OCI-LY7 (cell line): ENCODE measurements at regions of chr1 and their contacts with region 1.

Region 1: GRCh38 chr1:93345633-93346420 is at the start of gene DR1:
- DNase-seq: peak; percentile 92
- H3K4me3 ChIP-seq: peak within 1 kb of the TSS; percentile 87
- H3K27ac ChIP-seq: peak within 1 kb of the TSS; percentile 74
- H3K4me1 ChIP-seq: peaks cover 20% of the 10 kb centered on the region
- CTCF ChIP-seq: no peak
- total RNA-seq, gene DR1: 61.3 and 81.3 TPM in 2 replicates

Region 2: DNA sequence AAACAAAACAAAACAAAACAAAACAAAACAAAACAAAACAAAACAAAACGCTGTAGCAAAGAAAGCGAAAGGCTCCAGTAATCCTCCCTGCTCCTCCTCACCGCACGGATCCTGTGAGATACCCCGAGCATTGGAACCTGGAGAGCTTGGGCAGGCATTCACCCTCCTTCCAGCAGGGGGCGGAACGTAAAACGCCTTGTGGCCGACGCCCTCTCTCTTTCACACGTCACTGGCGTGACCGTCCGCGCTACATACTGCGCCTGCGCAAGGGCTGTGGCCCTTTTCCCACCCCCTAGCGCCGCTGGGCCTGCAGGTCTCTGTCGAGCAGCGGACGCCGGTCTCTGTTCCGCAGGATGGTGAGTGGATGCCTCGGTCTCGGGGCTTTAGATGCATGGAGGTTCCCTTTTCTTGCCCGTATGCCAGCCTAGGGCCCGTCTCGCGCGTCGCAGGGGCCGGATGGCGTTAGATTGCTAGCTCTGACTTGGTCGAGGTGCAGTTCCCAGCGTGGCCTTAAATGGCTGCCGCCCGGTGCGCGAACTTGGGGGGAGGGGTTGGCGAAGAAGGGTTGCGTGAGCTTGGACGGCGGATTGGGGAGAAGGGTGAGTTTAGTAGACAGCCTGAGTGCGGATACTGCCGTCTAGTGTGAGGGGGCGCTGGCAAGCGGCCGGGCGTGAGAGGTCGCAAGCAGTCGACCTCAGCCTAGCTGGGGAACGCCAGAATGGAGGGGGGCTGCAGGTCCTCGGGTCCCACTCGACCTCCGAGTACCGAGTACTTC is 513.9 kb before region 1 on chr1 and contains the start of gene RPL5:
- CTCF ChIA-PET with region 1: no interaction called
- POLR2A ChIA-PET with region 1: interaction called, 3 read pairs
- intact Hi-C with region 1: loop called (anchors 5 kb)
- DNase-seq: peak; percentile 98
- H3K4me3 ChIP-seq: peak within 1 kb of the TSS; percentile 89
- H3K27ac ChIP-seq: peak within 1 kb of the TSS; percentile 59
- H3K4me1 ChIP-seq: peaks cover 41% of the 10 kb centered on the region
- CTCF ChIP-seq: peak; percentile 85
- total RNA-seq, gene RPL5: 1,862 and 2,614 TPM in 2 replicates

Region 3: DNA sequence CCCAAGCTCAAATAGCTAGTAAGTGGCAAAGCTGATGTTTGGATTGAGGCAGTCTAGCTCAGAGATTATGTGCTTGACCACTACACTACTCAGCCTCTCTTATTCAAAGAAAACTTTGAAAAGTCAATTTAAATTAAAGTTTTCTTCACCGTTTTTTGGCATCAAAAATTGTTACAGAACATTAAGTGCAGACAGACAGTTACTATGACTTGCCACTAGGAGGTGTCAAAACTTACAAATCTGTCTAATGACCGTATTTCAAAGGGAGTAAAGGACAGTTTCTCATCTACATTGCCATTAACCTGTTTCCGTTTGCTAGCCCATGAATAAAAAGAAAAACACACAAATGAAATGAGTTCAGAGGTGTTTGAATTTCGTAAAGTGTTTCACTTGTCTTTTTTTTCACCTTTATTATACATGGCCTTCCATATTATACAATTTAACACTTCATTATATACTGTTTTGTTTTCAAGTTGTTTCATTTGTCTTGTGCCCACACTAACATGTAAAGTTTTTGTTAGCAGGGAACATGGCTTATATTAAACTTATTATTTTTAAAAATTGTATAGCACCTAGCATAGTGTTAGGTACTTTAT is 324.2 kb before region 1 on chr1:
- CTCF ChIA-PET with region 1: no interaction called
- POLR2A ChIA-PET with region 1: interaction called, 3 read pairs
- intact Hi-C with region 1: loop called (anchors 5 kb)
- DNase-seq: peak; percentile 87
- H3K4me3 ChIP-seq: peak overlapping the region; percentile 40
- H3K27ac ChIP-seq: peak overlapping the region; percentile 75
- H3K4me1 ChIP-seq: peaks cover 57% of the 10 kb centered on the region
- CTCF ChIP-seq: peak; percentile 100

Region 4: GRCh38 chr1:93164816-93165215 is 181.0 kb before region 1 on chr1:
- CTCF ChIA-PET with region 1: no interaction called
- POLR2A ChIA-PET with region 1: no interaction called
- intact Hi-C with region 1: no loop called
- DNase-seq: no peak
- H3K4me3 ChIP-seq: no peak overlapping the region
- H3K27ac ChIP-seq: no peak overlapping the region
- H3K4me1 ChIP-seq: no peaks in the 10 kb centered on the region
- CTCF ChIP-seq: no peak

Region 5: DNA sequence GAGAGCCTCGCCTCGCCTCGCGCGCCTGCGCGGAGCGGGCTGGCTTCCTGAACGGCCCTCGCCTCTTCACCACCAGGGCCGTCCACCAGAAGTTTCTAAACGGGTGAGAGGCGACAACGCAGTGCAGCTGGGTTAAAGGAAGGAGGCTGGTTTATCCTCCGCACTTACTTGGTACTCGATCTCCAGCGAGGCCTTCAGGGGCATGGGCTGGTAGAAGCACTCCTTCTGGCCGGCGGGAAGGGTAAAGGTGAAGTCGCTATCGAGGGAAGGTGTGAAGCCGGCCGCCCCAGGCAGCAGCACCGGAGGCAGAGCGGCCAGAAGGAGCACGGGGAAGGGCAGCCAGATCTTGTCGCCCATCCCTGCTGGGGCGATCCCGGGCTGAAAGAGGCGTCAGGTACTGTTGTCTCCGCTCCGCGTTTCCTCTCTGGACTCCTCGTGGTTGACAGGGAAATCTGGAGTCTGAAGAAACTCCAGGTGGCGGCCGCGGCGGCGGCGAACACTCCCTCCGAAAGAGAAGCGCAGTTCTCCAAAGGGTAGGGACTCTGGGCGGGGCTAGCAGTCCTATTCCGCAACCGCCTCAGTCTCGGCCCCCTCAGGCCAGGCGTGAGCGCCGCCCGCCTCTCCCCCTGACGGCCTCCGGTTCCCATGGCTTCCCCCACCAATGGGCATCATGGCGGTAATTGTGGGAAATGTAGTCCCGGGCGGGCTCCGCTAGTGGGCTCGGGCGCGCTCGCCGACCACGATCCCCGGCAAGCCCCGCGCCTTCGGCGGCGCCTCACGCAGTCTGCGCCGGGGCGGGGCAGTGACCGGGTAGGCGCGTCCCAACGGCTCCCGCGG is 165.7 kb before region 1 on chr1 and contains the start of gene TMED5:
- CTCF ChIA-PET with region 1: no interaction called
- POLR2A ChIA-PET with region 1: no interaction called
- intact Hi-C with region 1: loop called (anchors 5 kb)
- DNase-seq: peak; percentile 98
- H3K4me3 ChIP-seq: peak within 1 kb of the TSS; percentile 79
- H3K27ac ChIP-seq: peak within 1 kb of the TSS; percentile 90
- H3K4me1 ChIP-seq: peaks cover 50% of the 10 kb centered on the region
- CTCF ChIP-seq: no peak
- total RNA-seq, gene TMED5: 40.3 and 43.1 TPM in 2 replicates

Region 6: GRCh38 chr1:93328809-93329760 is 16.7 kb before region 1 on chr1:
- CTCF ChIA-PET with region 1: interaction called, 4 read pairs
- POLR2A ChIA-PET with region 1: interaction called, 15 read pairs
- intact Hi-C with region 1: no loop called
- DNase-seq: peak; percentile 74
- H3K4me3 ChIP-seq: no peak overlapping the region
- H3K27ac ChIP-seq: peak overlapping the region; percentile 67
- H3K4me1 ChIP-seq: peaks cover 14% of the 10 kb centered on the region
- CTCF ChIP-seq: no peak